ENCODE measurements at regions of chr12 and their contacts with region 1.

Region 1: DNA sequence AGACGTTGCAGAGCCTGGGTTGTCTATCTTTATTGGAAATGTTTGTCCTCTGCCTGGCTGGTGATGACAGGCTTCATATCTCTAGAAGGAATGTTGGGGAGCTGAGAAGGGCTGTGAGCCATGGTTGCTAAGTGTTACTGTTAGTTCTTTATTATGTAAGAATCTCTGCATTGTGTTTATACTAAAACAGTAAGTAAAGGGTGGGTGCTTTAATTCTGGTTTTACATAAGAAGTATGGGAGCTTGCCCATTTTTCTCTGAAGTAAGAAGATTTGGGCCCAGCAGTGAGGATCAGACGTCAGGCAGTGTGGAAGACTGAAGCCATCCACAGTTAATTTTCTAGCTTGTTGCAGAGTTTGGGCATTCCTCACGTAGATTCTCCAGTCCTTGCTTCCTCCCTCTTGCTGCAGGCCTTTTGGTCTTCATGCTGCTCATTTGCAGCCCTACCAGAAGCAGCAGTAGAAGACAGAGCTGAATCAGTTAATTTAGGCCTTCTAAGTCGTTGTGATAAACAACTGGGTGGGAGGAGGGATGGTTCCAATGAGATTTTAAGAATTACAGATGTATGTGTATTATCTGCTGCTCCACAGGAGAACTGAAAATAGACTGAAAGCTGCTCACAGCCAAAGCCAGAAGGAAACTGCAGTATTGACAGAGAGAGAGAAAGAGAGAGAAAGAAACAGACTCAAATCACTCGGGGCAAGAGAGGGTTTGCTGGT is 21.4 kb downstream of the WNT5B start:
- DNase-seq: peak in 1 of 9 experiments; percentile 0
- ATAC-seq: no peak
- H3K4me3 ChIP-seq: no peak overlapping the region
- H3K4me3 Mint-ChIP-seq: no peak overlapping the region
- H3K27ac ChIP-seq: no peak overlapping the region
- H3K27ac Mint-ChIP-seq: no peak overlapping the region
- H3K4me1 ChIP-seq: no peaks in the 10 kb centered on the region
- H3K4me1 Mint-ChIP-seq: peaks cover 3% of the 10 kb centered on the region
- H3K27me3 ChIP-seq: no peaks in the 10 kb centered on the region
- H3K27me3 Mint-ChIP-seq: peaks cover 13% of the 10 kb centered on the region
- CTCF ChIP-seq: no peak

Region 2: DNA sequence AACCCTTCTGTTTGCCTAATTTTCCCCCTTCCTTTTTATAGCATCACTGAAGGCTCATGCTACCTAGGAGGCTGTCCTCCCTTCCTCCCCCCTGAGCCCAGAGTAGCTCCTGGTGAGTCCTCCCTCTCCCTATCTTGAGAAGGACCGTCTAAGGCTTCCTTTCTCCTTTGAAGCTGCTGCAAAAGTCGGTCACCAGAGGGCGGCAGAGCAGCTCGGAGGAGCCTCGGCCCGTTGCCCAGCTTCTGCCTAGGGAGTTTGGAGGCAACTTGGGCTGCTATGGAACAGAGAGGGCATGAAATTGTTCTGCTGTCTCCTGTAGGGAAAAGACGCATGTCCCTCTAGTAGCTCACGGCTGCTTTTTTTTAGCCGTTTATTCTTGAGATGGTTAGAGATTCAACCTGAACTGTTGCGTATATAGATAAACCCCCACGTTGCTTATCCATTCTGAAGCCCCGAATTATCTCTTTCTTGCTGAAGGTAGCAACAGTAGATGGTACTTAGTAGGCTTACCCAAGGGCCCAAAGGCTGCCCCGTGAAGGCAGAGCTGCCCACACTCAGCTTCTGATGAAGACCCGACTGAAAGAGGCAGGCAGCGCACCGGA is 15.7 kb before region 1 on chr12:
- CTCF ChIA-PET with region 1: interaction called, 25 read pairs
- POLR2A ChIA-PET with region 1: no interaction called
- intact Hi-C with region 1: no loop called
- DNase-seq: peak; percentile 18 to 71 (median 64)
- ATAC-seq: peak; percentile 52
- H3K4me3 ChIP-seq: no peak overlapping the region
- H3K4me3 Mint-ChIP-seq: no peak overlapping the region
- H3K27ac ChIP-seq: no peak overlapping the region
- H3K27ac Mint-ChIP-seq: no peak overlapping the region
- H3K4me1 ChIP-seq: peaks cover 13% of the 10 kb centered on the region
- H3K4me1 Mint-ChIP-seq: peaks cover 13% of the 10 kb centered on the region
- H3K27me3 ChIP-seq: peaks cover 12 to 21% of the 10 kb centered on the region in 2 experiments
- H3K27me3 Mint-ChIP-seq: peaks cover 42% of the 10 kb centered on the region
- CTCF ChIP-seq: peak; percentile 70

Region 3: DNA sequence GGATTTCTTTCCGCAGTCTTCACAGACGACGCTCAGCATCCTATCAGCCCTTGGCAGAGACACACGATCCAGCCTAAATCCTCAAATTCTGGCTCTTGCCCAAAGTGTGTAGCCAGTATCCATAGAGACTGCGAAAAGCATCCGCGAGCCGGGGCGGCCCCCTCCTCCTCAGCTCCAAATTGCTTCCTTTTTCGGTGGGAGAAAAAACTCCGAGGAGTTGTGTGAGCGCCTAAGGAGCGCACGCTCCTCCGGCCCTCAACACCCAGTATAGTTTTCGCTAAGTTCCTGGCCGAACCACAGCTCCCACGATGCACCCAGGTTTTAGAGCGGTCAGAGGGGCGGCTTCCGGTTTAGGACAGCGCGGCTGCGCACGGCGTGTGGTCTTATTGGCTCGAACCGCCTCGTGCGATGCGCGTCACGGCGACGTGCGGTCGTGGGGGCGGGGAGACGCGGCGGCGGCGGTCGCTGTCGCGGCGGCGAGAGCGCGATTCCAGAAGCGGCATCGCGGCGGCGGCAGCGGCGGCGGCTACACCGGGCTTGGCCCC is 40.2 kb after region 1 on chr12 and contains the start of gene ADIPOR2:
- CTCF ChIA-PET with region 1: interaction called, 13 read pairs
- POLR2A ChIA-PET with region 1: interaction called, 7 read pairs
- intact Hi-C with region 1: loop called in 1 of 2 experiments (anchors 2 kb)
- DNase-seq: peak; percentile 88 to 98 (median 94)
- ATAC-seq: peak; percentile 97
- H3K4me3 ChIP-seq: peak within 1 kb of the TSS; percentile 84 to 91
- H3K4me3 Mint-ChIP-seq: peak within 1 kb of the TSS; percentile 92
- H3K27ac ChIP-seq: peak within 1 kb of the TSS; percentile 73 to 94
- H3K27ac Mint-ChIP-seq: peak within 1 kb of the TSS; percentile 99
- H3K4me1 ChIP-seq: peaks cover 20% of the 10 kb centered on the region
- H3K4me1 Mint-ChIP-seq: peaks cover 46% of the 10 kb centered on the region
- H3K27me3 ChIP-seq: no peaks in the 10 kb centered on the region
- H3K27me3 Mint-ChIP-seq: no peaks in the 10 kb centered on the region
- CTCF ChIP-seq: no peak
- total RNA-seq, gene ADIPOR2: 19.4 to 22.5 TPM

Region 4: DNA sequence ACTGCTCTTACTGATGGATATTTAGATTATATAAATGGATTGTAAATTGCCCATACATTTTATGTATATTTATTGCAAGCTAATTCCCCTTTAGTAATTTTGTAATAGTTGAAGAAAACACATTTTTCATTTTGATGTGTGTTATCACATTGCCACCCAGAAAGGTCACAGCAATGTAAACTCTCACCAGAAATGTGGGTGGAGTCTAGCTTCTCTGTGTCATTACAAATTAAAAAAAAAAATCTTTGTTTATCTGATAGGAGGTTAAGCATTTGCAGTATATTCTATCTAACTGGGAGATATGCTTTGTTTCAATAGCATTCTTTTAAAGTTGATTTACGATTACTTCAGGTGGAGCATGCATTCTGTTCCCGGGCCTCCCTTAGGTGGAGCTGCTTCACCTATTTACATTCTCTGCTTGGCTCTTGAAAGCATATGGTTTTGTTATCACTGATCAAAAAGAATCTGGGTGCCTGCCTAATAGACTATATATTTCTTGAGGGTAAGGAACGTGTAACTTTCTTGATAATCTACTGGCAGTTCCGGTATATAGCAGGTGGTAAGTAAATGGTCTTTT is 48.3 kb after region 1 on chr12:
- CTCF ChIA-PET with region 1: interaction called, 13 read pairs
- POLR2A ChIA-PET with region 1: no interaction called
- intact Hi-C with region 1: no loop called
- DNase-seq: no peak
- ATAC-seq: no peak
- H3K4me3 ChIP-seq: no peak overlapping the region
- H3K4me3 Mint-ChIP-seq: no peak overlapping the region
- H3K27ac ChIP-seq: no peak overlapping the region
- H3K27ac Mint-ChIP-seq: no peak overlapping the region
- H3K4me1 ChIP-seq: peaks cover 16% of the 10 kb centered on the region
- H3K4me1 Mint-ChIP-seq: peaks cover 68% of the 10 kb centered on the region
- H3K27me3 ChIP-seq: no peaks in the 10 kb centered on the region
- H3K27me3 Mint-ChIP-seq: no peaks in the 10 kb centered on the region
- CTCF ChIP-seq: no peak

Region 5: DNA sequence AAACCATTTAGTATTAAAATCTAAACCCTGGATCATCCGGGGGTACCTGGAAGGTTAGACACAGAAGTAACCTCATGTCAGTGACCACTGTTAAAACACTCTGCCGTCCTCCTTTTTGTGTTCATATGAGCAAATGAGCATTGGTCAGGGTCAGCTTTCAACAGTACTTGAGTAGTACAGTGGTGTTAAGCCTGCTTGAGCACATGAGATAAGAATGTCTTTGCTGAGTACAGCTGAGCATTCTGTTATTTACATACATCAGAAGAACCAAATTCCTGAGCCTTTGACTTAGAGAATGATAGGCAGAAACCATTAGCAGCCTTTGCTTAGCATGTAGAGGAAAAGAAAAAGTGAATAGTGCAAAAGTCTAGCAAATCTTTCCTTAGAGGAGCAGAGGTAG is 131.4 kb after region 1 on chr12:
- CTCF ChIA-PET with region 1: interaction called, 17 read pairs
- POLR2A ChIA-PET with region 1: interaction called, 6 read pairs
- intact Hi-C with region 1: no loop called
- DNase-seq: no peak
- ATAC-seq: no peak
- H3K4me3 ChIP-seq: no peak overlapping the region
- H3K4me3 Mint-ChIP-seq: no peak overlapping the region
- H3K27ac ChIP-seq: no peak overlapping the region
- H3K27ac Mint-ChIP-seq: no peak overlapping the region
- H3K4me1 ChIP-seq: no peaks in the 10 kb centered on the region
- H3K4me1 Mint-ChIP-seq: no peaks in the 10 kb centered on the region
- H3K27me3 ChIP-seq: no peaks in the 10 kb centered on the region
- H3K27me3 Mint-ChIP-seq: no peaks in the 10 kb centered on the region
- CTCF ChIP-seq: no peak

Region 6: GRCh38 chr12:2034633-2035430 is 384.4 kb after region 1 on chr12:
- CTCF ChIA-PET with region 1: no interaction called
- POLR2A ChIA-PET with region 1: no interaction called
- intact Hi-C with region 1: loop called in 1 of 2 experiments (anchors 10 kb)
- DNase-seq: peak; percentile 72 to 91 (median 83)
- ATAC-seq: peak; percentile 99
- H3K4me3 ChIP-seq: peak overlapping the region; percentile 49 to 51
- H3K4me3 Mint-ChIP-seq: peak overlapping the region; percentile 66
- H3K27ac ChIP-seq: no peak overlapping the region
- H3K27ac Mint-ChIP-seq: no peak overlapping the region
- H3K4me1 ChIP-seq: peaks cover 12% of the 10 kb centered on the region
- H3K4me1 Mint-ChIP-seq: peaks cover 15% of the 10 kb centered on the region
- H3K27me3 ChIP-seq: no peaks in the 10 kb centered on the region
- H3K27me3 Mint-ChIP-seq: peaks cover 29% of the 10 kb centered on the region
- CTCF ChIP-seq: peak; percentile 88

Region 7: GRCh38 chr12:2101771-2102170 is 451.4 kb after region 1 on chr12:
- CTCF ChIA-PET with region 1: no interaction called
- POLR2A ChIA-PET with region 1: no interaction called
- intact Hi-C with region 1: no loop called
- DNase-seq: no peak
- ATAC-seq: no peak
- H3K4me3 ChIP-seq: no peak overlapping the region
- H3K4me3 Mint-ChIP-seq: no peak overlapping the region
- H3K27ac ChIP-seq: no peak overlapping the region
- H3K27ac Mint-ChIP-seq: no peak overlapping the region
- H3K4me1 ChIP-seq: no peaks in the 10 kb centered on the region
- H3K4me1 Mint-ChIP-seq: no peaks in the 10 kb centered on the region
- H3K27me3 ChIP-seq: no peaks in the 10 kb centered on the region
- H3K27me3 Mint-ChIP-seq: no peaks in the 10 kb centered on the region
- CTCF ChIP-seq: no peak

Measured in CD8-positive, alpha-beta T cell (primary cell).